Activated CD4-positive, alpha-beta memory T cell treated with anti-CD3 and anti-CD28 coated beads for 36 hours (primary cell): ENCODE measurements at regions of chr11 and their contacts with region 1.

Region 1: DNA sequence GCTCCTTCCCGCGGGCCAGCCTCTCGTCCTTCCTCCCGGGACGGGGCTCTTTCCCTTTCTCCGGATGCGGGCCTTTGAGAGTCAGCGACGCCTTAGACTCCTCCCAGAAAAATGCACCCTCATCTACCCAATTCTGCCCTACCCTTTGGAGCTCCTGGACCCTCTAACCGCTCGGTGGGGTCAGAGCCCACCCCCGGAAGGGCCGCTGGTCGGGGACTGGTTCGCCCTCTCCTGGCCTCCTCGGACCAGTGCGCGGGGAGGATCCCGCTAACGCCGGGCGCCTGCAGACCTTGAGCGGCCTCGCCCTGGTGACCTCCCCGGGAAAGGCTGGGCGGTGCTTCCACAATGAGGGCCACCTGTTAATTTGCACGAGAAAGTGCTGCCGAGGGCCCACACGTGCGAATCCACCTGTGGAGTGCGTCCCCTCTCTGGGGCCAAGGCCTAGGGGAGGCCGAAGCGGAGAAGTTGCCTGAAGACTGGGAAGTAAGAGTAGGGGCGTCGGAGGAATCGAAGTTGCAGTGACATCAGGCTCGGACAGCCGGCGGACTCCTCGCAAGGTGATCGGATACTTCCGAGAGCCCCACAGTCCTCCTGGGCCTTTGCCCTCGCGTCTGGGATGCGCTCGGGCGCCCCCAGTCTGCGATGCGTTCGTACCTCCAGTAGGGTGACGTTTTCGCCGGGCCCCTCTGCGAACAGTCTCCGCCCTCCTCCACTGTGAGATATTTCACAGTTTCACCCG is 61.5 kb downstream of the ENDOD1 start:
- DNase-seq: peak; percentile 95
- H3K4me3 Mint-ChIP-seq: peak overlapping the region; percentile 81
- H3K27ac Mint-ChIP-seq: peak overlapping the region; percentile 88
- H3K4me1 Mint-ChIP-seq: peaks cover 36% of the 10 kb centered on the region
- H3K27me3 Mint-ChIP-seq: no peaks in the 10 kb centered on the region

Region 2: DNA sequence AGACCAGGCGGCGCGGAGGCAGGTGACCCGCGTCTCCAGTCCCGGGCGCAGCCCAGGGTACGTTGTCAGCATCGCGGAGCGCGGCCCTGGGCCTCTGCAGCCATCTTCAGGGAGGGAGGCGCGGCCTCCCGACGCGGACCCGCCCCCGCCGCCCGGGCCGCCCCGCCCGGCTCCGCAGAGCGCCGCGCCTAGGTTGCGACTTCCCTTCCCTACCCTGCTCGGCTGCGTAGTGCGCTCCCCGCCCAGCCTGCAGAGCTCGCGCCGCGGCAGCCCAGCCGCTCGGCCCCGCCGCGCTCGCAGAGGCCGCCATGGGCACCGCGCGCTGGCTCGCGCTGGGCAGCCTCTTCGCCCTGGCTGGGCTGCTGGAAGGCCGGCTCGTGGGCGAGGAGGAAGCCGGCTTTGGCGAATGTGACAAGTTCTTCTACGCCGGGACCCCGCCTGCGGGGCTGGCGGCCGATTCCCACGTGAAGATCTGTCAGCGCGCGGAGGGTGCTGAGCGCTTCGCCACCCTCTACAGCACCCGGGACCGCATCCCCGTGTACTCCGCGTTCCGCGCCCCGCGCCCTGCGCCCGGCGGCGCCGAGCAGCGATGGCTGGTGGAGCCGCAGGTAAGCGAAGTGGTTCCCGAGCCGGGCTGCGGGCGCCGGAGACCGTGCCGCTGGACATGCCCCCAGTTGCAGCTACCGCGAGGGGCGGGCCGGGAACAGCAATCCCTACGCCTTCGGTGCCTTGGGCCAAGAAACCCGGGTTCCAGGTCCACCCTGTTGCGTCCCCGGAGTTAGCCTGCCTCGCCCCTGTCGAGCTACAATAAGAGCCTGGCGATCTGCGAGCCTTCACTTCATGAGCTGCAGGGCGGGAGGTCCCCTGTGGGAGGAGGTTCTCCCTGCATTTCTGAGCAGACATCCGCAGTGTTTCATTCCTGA is 61.2 kb before region 1 on chr11 and contains the start of gene ENDOD1:
- CTCF ChIA-PET with region 1: interaction called, 51 read pairs
- POLR2A ChIA-PET with region 1: interaction called, 4 read pairs
- intact Hi-C with region 1: loop called (anchors 1 kb)
- DNase-seq: peak; percentile 90
- H3K4me3 Mint-ChIP-seq: peak within 1 kb of the TSS; percentile 87
- H3K27ac Mint-ChIP-seq: peak within 1 kb of the TSS; percentile 92
- H3K4me1 Mint-ChIP-seq: peaks cover 68% of the 10 kb centered on the region
- H3K27me3 Mint-ChIP-seq: no peaks in the 10 kb centered on the region
- total RNA-seq, gene ENDOD1: 25.9 TPM

Region 3: DNA sequence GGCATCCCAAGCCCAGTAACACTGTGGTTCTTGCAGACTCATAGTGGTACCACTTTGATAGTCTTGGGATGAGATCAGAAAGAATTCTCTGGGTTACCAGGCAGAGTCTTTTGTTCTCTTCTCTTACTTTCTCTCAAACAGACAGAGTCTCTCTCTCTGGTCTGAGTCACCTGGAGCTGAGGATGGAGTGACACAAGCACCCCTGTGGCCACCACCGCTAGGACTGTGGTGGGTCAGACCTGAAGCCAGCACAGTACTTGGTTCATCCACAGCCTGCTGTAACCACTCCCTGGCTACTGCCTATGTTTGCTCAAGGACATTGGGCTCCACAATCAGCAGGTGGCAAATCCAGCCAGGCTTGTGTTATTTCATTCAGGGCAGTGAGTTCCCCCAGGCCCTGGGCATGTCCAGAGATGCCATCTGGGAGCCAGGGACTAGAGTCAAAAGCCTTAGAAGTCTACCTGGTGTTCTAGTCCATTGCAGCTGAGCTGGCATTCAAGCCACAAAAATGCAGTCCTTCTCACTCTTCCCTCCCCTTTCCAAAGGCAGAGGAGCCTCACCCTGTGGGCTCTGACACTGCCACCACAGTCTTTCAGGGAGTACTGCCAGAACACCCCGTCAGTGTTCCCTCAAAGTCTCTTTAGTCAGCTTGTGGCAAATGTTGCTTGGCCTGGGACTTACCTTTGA is 31.6 kb before region 1 on chr11:
- CTCF ChIA-PET with region 1: no interaction called
- POLR2A ChIA-PET with region 1: no interaction called
- intact Hi-C with region 1: no loop called
- DNase-seq: peak; percentile 24
- H3K4me3 Mint-ChIP-seq: no peak overlapping the region
- H3K27ac Mint-ChIP-seq: no peak overlapping the region
- H3K4me1 Mint-ChIP-seq: peaks cover 8% of the 10 kb centered on the region
- H3K27me3 Mint-ChIP-seq: no peaks in the 10 kb centered on the region

Region 4: DNA sequence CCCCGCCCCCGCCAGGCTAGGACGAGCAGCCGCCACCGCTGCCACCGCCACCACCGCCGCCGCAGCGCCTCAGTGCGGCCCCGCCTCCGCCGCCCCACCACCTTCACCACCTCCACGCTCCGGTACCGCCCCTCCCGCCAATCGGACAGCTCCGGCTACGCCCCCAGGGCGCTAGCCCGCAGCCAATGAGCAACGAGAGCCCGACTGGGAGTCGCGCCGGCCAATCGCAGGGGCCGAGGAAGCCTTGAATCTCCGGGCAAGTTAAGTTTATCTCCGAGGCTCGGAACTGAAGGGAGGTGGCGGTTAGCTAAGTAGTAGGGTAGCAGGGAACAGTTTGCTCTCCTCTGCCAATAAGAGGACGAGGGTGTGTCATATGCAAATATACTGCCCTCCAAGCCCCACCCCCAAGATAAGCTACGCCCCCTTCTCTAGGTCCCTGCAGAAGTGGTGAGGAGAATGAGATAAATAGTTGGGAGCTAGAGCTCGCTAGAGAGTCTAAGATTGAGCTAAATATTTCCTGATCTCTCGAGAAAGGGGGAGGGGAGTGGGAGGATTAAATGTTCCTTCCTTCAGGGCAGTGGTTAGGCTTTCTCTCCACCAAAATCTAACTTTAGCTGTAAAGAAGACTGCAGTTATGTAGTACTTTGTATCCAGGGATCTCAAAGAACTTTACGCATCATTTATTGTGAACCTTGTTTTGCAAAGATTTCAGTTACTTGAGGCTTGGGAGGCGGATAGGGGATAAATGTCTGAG is 80.2 kb after region 1 on chr11 and contains the start of gene SESN3:
- CTCF ChIA-PET with region 1: interaction called, 37 read pairs
- POLR2A ChIA-PET with region 1: interaction called, 3 read pairs
- intact Hi-C with region 1: loop called (anchors 1 kb)
- DNase-seq: peak; percentile 99
- H3K4me3 Mint-ChIP-seq: no peak within 1 kb of the TSS
- H3K27ac Mint-ChIP-seq: peak within 1 kb of the TSS; percentile 85
- H3K4me1 Mint-ChIP-seq: peaks cover 53% of the 10 kb centered on the region
- H3K27me3 Mint-ChIP-seq: no peaks in the 10 kb centered on the region
- total RNA-seq, gene SESN3: 13.9 to 15.5 TPM

Region 5: DNA sequence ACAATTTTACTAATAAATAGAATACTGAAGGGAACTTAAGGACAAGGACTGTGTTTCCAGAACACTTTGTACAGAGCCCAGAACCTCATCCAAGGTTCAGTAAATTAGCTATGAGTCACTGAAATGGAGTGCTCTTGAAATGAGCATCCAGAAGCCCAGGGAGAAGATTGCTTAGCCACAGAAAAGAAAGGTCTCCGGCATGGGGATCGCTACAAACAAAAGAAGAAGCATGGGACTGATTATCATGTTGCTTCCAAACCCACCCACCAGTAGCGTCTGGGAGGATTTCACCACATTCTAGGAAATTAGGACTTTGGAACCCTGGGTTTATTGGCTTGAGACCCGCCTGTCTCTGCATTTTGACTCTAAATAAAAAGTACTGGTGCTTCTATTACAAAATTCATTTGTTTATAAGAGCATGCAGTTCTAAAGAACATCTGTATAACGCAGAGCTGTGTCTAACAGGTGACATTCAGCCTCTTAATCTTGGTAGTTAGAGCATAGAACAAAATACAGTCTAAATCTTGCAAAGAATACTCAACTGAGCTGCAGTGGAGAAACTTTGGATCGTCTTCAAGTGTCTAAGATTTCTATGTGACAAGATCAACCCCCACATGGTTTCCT is 115.7 kb after region 1 on chr11:
- CTCF ChIA-PET with region 1: no interaction called
- POLR2A ChIA-PET with region 1: no interaction called
- intact Hi-C with region 1: no loop called
- DNase-seq: no peak
- H3K4me3 Mint-ChIP-seq: no peak overlapping the region
- H3K27ac Mint-ChIP-seq: no peak overlapping the region
- H3K4me1 Mint-ChIP-seq: peaks cover 6% of the 10 kb centered on the region
- H3K27me3 Mint-ChIP-seq: no peaks in the 10 kb centered on the region

Region 6: DNA sequence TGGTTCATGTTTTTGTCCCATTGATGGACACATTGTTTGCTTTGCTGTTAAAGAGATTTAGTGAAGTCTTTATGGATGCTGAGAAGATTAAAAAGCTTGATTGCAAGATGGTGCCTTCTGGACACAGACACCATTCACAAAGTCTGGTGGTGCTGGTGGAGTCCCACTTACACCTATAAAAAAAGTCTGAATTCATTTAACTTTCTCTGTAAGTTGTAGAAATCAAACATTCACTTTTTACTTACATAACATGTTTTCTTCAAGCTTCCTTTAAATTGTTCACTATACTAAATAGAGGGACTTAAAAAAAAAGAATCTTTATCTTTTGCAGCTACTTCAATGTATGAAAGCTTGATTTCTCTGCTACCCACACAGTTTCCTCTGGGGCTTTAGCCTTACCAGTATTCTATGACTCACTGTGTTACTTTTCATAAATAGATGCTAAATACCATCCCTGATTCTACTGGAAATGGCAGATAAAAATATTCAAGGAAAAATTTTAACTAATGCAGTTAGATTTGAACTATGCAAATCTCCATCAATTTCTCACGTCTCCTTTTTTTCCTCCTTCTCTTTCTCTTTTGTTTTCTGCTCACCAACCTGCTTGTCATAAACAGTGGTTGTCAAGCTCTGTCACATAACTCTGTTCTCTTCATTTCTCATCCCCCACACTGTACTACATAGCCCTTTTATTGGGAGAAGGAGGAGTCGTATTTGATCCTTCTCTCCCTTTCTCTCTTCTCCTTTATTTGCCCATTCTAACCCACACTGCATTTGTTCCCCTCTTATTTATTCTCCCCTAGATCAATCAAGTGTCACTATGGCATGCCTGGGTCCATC is 548.7 kb after region 1 on chr11:
- CTCF ChIA-PET with region 1: interaction called, 389 read pairs
- POLR2A ChIA-PET with region 1: no interaction called
- intact Hi-C with region 1: loop called (anchors 1 kb)
- DNase-seq: no peak
- H3K4me3 Mint-ChIP-seq: peak overlapping the region; percentile 65
- H3K27ac Mint-ChIP-seq: peak overlapping the region; percentile 85
- H3K4me1 Mint-ChIP-seq: peaks cover 56% of the 10 kb centered on the region
- H3K27me3 Mint-ChIP-seq: no peaks in the 10 kb centered on the region

Region 7: GRCh38 chr11:95835768-95836488 is 684.8 kb after region 1 on chr11:
- CTCF ChIA-PET with region 1: interaction called, 3 read pairs
- POLR2A ChIA-PET with region 1: no interaction called
- intact Hi-C with region 1: loop called (anchors 5 kb)
- DNase-seq: peak; percentile 63
- H3K4me3 Mint-ChIP-seq: no peak overlapping the region
- H3K27ac Mint-ChIP-seq: no peak overlapping the region
- H3K4me1 Mint-ChIP-seq: peaks cover 3% of the 10 kb centered on the region
- H3K27me3 Mint-ChIP-seq: no peaks in the 10 kb centered on the region